ENCODE measurements at regions of chr10 and their contacts with region 1.

Region 1: GRCh38 chr10:79068562-79069324 is at the start of gene ZMIZ1:
- DNase-seq: peak; percentile 93
- total RNA-seq, gene ZMIZ1: 40.7 TPM

Region 2: DNA sequence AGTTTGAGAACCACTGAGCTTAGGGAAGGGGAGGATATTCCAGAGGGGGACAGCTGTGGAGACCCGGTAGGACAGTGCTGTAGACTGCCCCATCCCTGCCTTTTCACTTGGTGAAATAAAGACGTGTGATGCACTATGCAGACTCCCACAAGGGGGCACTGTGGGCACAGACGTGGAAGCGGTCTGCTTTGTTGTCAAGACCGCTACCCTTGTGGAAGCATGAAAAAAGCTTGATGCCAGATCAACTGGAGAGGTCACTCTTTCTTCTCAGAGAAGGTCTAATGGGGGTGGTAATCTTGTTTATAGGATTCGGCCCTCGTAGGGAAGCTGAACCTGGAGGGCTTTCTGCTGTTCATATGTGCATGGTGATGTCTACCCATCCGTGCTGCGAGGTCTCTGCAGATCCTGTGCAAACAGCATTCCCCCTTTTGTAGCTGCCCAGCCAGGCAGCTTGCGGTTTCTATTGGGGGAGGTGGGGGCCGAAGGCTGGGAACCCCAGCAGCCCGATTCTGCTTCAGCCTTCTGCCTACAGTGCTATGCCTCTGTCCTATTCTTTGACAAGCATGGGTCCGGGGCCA is 1021.3 kb before region 1 on chr10:
- intact Hi-C with region 1: loop called (anchors 5 kb)
- DNase-seq: peak; percentile 90

Region 3: DNA sequence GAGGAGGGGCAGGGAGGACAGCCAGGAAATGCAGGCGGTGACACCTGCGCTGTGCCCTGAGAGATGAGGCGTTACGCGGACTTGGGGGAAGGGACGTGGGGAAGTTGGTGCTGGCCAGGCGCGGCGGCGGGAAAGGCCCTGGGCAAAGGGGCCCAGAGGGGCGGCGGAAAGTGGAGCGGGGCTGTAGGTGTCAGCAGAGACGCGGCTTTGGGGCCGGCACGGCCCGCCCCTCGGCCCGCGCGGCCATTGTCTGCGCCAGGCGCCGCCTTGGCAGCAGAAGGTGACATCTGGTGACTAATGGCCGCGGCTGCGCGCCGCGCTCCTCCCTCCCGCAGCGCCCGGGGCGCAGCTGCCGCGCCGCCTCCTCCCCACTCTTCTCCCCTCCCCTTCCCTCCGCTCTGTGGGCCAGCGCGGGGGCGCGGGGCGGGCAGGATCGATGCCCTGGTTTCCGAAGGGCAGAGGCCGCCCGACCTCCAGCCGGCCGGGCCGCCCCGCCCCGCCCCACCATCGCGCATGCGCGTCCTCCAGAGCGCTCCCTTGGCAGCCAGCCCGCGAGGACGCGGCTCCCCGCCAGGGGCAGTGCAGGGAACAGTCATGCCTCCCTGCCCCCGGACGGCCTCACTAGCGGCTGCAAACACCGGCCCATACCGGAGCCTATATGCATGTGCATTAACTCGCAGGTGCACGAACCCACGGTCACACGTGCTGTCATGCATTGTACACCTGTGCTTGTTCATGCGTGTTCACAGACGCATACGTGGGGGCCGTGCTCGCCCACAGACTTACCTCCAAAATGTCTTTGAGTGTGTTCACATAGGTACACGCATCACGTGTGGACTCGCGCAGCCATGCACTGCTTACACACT is 765.5 kb before region 1 on chr10:
- intact Hi-C with region 1: loop called (anchors 5 kb)
- DNase-seq: peak; percentile 98

Region 4: GRCh38 chr10:78784546-78784945 is 284.2 kb before region 1 on chr10:
- intact Hi-C with region 1: loop called (anchors 10 kb)
- DNase-seq: peak; percentile 20

Region 5: GRCh38 chr10:78931321-78932053 is 137.3 kb before region 1 on chr10:
- intact Hi-C with region 1: loop called (anchors 5 kb)
- DNase-seq: no peak

Region 6: GRCh38 chr10:78944723-78945312 is 123.9 kb before region 1 on chr10:
- intact Hi-C with region 1: no loop called
- DNase-seq: no peak

Region 7: GRCh38 chr10:79023240-79024162 is 45.2 kb before region 1 on chr10:
- intact Hi-C with region 1: loop called (anchors 2 kb)
- DNase-seq: peak; percentile 77

Region 8: GRCh38 chr10:79149662-79150443 is 81.1 kb after region 1 on chr10:
- intact Hi-C with region 1: loop called (anchors 2 kb)
- DNase-seq: peak; percentile 95